ENCODE measurements at regions of chrX and their contacts with region 1.

Region 1: GRCh38 chrX:21940356-21940829 is at the start of gene SMS:
- DNase-seq: peak; percentile 89
- ATAC-seq: peak; percentile 97
- total RNA-seq, gene SMS: 54.4 TPM

Region 2: GRCh38 chrX:21839334-21840192 is 100.8 kb before region 1 on chrX and contains the start of gene MBTPS2:
- intact Hi-C with region 1: loop called (anchors 5 kb)
- DNase-seq: peak; percentile 88
- ATAC-seq: peak; percentile 95
- total RNA-seq, gene MBTPS2: 8.3 TPM